Body of pancreas (tissue), 4 donors: ENCODE measurements at regions of chr2 and their contacts with region 1.

Region 1: GRCh38 chr2:134900151-134900550 is 18.5 kb upstream of the CCNT2 start:
- DNase-seq: no peak
- ATAC-seq: no peak
- H3K4me3 ChIP-seq: no peak overlapping the region
- H3K27ac ChIP-seq: no peak overlapping the region
- H3K4me1 ChIP-seq: peaks cover 17% of the 10 kb centered on the region
- H3K27me3 ChIP-seq: no peaks in the 10 kb centered on the region
- CTCF ChIP-seq: no peak
- POLR2A ChIP-seq: no peak

Region 2: DNA sequence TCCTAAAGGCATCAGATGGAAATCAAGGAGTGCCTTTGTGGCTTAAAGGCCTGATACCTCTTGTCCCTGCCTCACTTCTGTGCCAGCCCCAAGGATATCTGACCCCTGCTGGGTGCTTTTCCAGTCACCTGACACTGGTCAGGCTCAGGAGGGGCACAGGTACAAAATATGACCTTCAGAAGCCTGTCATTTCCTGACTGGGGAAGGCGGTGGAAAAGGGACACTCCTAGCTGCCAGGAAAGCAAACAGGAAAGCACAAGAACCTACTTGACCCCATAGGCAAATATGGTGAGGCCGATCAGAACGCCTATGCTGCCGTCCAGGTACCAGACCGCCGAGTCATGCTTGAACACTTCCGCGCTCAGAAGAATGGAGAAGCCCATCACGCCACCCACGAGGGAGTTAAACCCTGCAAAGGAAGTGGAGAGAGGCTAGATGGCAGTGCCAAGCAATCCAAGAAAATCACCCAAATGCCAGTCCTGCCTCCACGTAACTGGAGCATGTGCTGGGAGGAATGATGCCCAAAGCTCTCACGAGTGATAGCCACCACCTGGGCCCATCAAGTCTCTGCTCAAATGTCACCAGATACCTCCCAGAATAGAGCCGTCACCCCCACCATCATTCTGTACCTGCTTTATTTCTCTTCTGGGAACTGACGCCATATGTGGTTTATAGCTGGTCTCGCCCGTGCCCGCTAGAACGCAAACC is 442.2 kb before region 1 on chr2:
- intact Hi-C with region 1: loop called (anchors 10 kb)
- DNase-seq: peak in 2 of 4 donors; percentile 11 to 53
- ATAC-seq: peak; percentile 20
- H3K4me3 ChIP-seq: no peak overlapping the region
- H3K27ac ChIP-seq: peak overlapping the region in 3 of 4 donors; percentile 12 to 40 (median 20)
- H3K4me1 ChIP-seq: peaks cover 17% of the 10 kb centered on the region
- H3K27me3 ChIP-seq: no peaks in the 10 kb centered on the region
- CTCF ChIP-seq: no peak
- POLR2A ChIP-seq: no peak